ENCODE measurements at regions of chrX and their contacts with region 1.

Region 1: GRCh38 chrX:151974336-151975227 is at the start of gene GABRE:
- DNase-seq: peak; percentile 85 to 87 (median 86)
- ATAC-seq: peak; percentile 88
- H3K4me3 ChIP-seq: peak within 1 kb of the TSS; percentile 93
- H3K27ac ChIP-seq: peak within 1 kb of the TSS; percentile 83
- H3K4me1 ChIP-seq: peaks cover 20 to 26% of the 10 kb centered on the region in 2 experiments; a peak in 4 of 5 replicates
- H3K27me3 ChIP-seq: no peaks in the 10 kb centered on the region
- CTCF ChIP-seq: no peak
- EP300 ChIP-seq: no peak
- POLR2A ChIP-seq: peak; percentile 90
- RAD21 ChIP-seq: no peak
- polyA plus RNA-seq, gene GABRE: 23.1 to 40.7 TPM

Region 2: GRCh38 chrX:151796576-151796975 is 178.0 kb before region 1 on chrX:
- CTCF ChIA-PET with region 1: no interaction called
- POLR2A ChIA-PET with region 1: no interaction called
- in situ Hi-C with region 1: no loop called
- intact Hi-C with region 1: no loop called
- DNase-seq: no peak
- ATAC-seq: no peak
- H3K4me3 ChIP-seq: no peak overlapping the region
- H3K27ac ChIP-seq: no peak overlapping the region
- H3K4me1 ChIP-seq: no peaks in the 10 kb centered on the region
- H3K27me3 ChIP-seq: peaks cover 0 to 6% of the 10 kb centered on the region in 2 experiments; a peak in 1 of 5 replicates
- CTCF ChIP-seq: no peak
- EP300 ChIP-seq: no peak
- POLR2A ChIP-seq: no peak
- RAD21 ChIP-seq: no peak

Region 3: DNA sequence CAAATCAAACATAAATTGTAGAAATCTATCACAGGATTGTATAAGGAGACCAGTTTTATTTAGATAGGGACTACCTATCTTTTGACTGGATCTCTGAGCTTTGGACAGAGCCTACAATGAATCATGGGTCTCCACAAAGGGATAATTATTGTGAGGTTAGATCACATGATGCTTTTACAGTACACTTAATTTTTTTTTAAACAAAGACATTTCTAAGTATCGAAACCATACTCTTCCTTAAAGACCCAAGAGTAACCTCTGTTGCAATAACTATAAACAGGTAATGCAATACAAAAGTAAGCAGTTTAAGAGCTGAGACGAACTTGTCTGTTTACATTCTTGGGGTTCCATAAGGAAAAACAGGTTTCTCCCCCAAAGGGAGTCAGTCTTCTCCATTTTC is 64.2 kb after region 1 on chrX:
- CTCF ChIA-PET with region 1: no interaction called
- POLR2A ChIA-PET with region 1: no interaction called
- in situ Hi-C with region 1: no loop called
- intact Hi-C with region 1: loop called (anchors 5 kb)
- DNase-seq: no peak
- ATAC-seq: no peak
- H3K4me3 ChIP-seq: no peak overlapping the region
- H3K27ac ChIP-seq: peak overlapping the region; percentile 48; the same call in 1 of the 3 replicates
- H3K4me1 ChIP-seq: no peaks in the 10 kb centered on the region
- H3K27me3 ChIP-seq: no peaks in the 10 kb centered on the region
- CTCF ChIP-seq: no peak
- EP300 ChIP-seq: no peak
- POLR2A ChIP-seq: no peak
- RAD21 ChIP-seq: no peak

Region 4: DNA sequence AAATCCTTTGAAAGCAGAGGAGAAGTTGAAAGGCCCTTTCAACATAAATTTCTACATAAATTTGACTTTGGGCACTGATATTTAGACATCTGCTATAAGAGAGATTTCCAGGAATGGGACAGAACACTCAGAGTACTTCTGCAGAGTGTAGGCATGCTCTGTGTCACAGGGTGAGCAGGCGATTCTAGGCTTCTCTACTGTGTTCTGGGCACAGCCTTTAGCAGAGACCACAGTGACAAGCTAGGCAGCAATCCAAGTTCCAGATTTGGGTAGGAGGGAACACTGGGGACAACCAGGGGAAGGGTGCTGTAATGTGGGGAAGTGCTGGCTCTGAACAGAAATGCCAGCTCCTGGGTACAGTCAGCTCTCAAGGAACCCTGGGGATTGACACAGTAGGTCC is 156.9 kb after region 1 on chrX:
- CTCF ChIA-PET with region 1: interaction called, 3 read pairs
- POLR2A ChIA-PET with region 1: no interaction called
- in situ Hi-C with region 1: no loop called
- intact Hi-C with region 1: loop called (anchors 10 kb)
- DNase-seq: no peak
- ATAC-seq: no peak
- H3K4me3 ChIP-seq: no peak overlapping the region
- H3K27ac ChIP-seq: no peak overlapping the region
- H3K4me1 ChIP-seq: peaks cover 7 to 32% of the 10 kb centered on the region in 2 experiments; a peak in 4 of 5 replicates
- H3K27me3 ChIP-seq: no peaks in the 10 kb centered on the region
- CTCF ChIP-seq: no peak
- EP300 ChIP-seq: no peak
- POLR2A ChIP-seq: no peak
- RAD21 ChIP-seq: no peak

Region 5: DNA sequence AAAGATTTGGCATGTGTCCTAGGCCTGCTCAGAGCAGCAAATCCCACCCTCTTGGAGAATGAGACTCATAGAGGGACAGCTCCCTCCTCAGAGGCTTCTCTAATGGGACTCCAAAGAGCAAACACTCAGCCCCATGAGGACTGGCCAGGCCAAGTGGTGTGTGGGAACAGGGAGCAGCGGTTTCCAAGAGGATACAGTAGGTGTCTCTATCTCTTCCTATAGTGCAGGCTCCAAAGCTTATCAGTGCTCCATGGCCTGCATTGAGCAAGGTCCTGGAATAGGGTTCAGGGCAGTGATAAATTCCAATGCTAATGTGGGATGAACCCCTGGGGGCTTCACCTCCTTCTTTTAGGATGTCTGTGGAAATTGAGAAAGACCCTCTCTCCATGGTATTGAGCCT is 179.5 kb after region 1 on chrX:
- CTCF ChIA-PET with region 1: no interaction called
- POLR2A ChIA-PET with region 1: interaction called, 5 read pairs
- in situ Hi-C with region 1: no loop called
- intact Hi-C with region 1: loop called (anchors 10 kb)
- DNase-seq: peak; percentile 24 to 56 (median 34)
- ATAC-seq: peak; percentile 47
- H3K4me3 ChIP-seq: no peak overlapping the region
- H3K27ac ChIP-seq: peak overlapping the region; percentile 51
- H3K4me1 ChIP-seq: peaks cover 17 to 82% of the 10 kb centered on the region in 2 experiments
- H3K27me3 ChIP-seq: no peaks in the 10 kb centered on the region
- CTCF ChIP-seq: peak in 1 of 3 experiments; percentile 37; a peak in 2 of 6 replicates
- EP300 ChIP-seq: 0 out of 2 replicates have a peak, but pooled peaks have one; percentile 19
- POLR2A ChIP-seq: no peak
- RAD21 ChIP-seq: peak; percentile 14 to 55

Region 6: GRCh38 chrX:152177497-152178269 is 203.1 kb after region 1 on chrX:
- CTCF ChIA-PET with region 1: no interaction called
- POLR2A ChIA-PET with region 1: interaction called, 4 read pairs
- in situ Hi-C with region 1: no loop called
- intact Hi-C with region 1: loop called (anchors 5 kb)
- DNase-seq: peak in 2 of 4 experiments; percentile 14 to 58
- ATAC-seq: peak; percentile 80
- H3K4me3 ChIP-seq: no peak overlapping the region
- H3K27ac ChIP-seq: peak overlapping the region; percentile 83
- H3K4me1 ChIP-seq: peaks cover 4 to 26% of the 10 kb centered on the region in 2 experiments
- H3K27me3 ChIP-seq: no peaks in the 10 kb centered on the region
- CTCF ChIP-seq: no peak
- EP300 ChIP-seq: peak; percentile 79; the same call in 1 of the 2 replicates
- POLR2A ChIP-seq: no peak
- RAD21 ChIP-seq: peak in 1 of 2 experiments; percentile 12; a peak in 1 of 4 replicates

Measured in K562 (cell line).